ENCODE measurements at regions of chrX and their contacts with region 1.

Region 1: GRCh38 chrX:129925305-129926092 is 19.5 kb downstream of the UTP14A start:
- DNase-seq: peak; percentile 32
- H3K4me3 ChIP-seq: no peak overlapping the region
- H3K27me3 ChIP-seq: no peaks in the 10 kb centered on the region
- CTCF ChIP-seq: peak; percentile 63

Region 2: DNA sequence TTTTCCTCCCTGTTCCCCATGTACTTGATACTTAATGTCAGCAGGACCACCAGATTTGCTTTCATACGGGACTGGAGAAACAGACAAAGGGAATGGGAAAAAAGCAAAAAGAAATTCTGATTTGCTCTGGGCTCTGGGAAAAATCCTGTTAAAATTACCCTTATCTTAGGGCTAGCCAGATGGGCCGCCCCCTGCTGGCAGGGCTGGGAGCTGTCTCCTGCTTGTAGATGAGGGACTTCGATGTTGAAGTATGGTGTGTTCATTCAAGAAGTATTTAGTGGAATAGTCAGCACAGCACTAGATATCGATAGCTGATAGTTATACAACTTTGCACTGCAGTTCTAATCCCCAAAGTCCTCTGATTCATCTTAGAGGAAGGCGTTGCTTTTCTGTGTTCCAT is 102.7 kb after region 1 on chrX:
- CTCF ChIA-PET with region 1: interaction called, 45 read pairs
- POLR2A ChIA-PET with region 1: no interaction called
- DNase-seq: peak; percentile 3
- H3K4me3 ChIP-seq: no peak overlapping the region
- H3K27me3 ChIP-seq: no peaks in the 10 kb centered on the region
- CTCF ChIP-seq: peak; percentile 73

Region 3: GRCh38 chrX:130055103-130055502 is 129.6 kb after region 1 on chrX:
- CTCF ChIA-PET with region 1: interaction called, 21 read pairs
- POLR2A ChIA-PET with region 1: no interaction called
- DNase-seq: peak; percentile 33
- H3K4me3 ChIP-seq: no peak overlapping the region
- H3K27me3 ChIP-seq: no peaks in the 10 kb centered on the region
- CTCF ChIP-seq: 0 out of 2 replicates have a peak, but pooled peaks have one; percentile 18

Region 4: DNA sequence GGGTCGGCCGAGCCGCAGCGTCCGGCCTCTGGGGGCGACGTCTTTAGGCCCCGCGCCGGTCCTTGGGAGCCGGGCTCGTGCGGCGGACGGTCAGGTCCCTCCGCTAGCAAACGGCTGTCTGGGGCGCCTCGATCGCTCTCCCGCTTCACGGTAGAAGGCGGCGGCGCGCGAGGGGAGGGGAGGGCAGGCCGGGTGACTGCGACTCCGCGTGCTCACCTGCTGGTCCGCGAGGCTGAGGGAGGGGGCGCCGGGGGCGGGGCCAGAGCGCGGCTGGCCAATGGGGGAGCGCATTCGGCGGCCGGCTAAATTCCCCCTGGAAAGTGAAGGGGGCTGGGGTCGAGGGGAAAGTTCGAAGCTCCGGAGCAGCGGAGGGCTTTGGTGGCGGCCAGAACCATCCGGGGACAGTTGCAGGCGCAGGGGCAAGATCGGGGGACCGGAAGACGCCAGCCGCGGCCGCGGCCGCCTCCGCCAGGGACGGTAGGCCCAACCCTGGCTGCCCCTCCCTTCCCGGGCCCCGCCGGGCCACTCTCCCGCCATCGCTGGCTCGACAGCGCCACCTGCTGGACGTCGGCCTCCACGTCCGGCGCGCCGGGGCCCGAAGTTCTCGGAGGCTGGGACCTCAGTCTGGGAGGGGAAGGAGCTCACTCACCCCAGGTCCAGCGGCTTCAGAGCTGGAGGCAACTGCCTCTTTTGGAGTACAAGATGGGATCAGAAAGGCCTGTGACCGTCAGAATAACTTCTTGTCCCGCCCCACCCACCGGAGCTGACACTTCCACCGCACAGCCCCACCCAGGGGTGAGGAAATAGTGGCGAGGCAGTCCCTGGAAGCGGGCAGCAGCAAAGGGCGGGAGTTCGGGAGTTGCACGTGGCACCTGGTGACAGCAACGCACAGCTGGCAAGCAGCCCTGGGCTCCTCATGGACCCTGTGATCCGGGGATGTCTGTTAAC is 134.9 kb after region 1 on chrX:
- CTCF ChIA-PET with region 1: interaction called, 21 read pairs
- POLR2A ChIA-PET with region 1: no interaction called
- DNase-seq: no peak
- H3K4me3 ChIP-seq: peak overlapping the region; percentile 54
- H3K27me3 ChIP-seq: no peaks in the 10 kb centered on the region
- CTCF ChIP-seq: peak; percentile 67

Measured in BJ (cell line).